Heart right ventricle (tissue), 16 donors: ENCODE measurements at regions of chr12 and their contacts with region 1.

Region 1: DNA sequence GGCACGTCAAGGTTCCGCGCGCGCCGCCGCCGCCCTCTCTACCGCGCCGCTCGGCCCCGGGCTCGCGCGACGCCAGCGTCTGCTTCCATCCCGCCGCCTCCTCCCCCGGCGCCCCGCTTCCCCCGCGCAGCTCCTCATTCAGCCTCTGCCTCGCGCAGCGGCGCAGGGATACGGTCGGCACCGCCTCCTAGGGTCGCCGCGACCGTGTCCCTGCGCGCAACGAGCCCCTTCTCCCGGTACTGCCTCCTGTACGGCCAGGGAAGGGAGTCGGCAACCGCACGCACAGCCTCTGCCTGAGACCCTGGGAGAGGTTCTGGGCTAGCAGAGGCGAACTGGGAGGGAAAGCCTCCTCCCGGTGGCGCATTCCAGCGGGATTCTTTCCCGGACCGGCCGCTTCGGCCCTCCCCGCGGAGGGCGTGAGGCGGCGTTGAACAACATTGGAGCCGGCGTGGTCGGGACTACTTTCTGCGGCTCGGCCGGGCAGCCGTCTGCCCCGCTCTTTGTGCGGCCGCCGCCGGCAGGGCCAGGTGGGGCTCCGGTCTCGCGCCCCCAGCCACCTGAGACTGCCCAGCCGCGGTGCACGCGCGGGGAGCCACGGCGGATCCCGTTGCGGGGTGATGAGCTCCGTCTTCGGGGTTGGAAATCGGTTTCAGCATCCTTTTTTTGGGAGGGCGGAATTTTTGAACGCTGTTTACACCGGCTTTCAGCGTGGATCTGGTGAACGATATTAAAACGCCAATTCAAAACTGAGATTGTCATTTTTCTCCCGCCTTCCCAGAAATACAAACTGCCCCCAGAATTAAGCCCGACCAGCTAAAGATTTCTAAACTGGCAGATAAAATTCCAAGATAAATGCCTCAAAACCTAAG is at the start of gene LRP6:
- DNase-seq: peak; percentile 91 to 92
- ATAC-seq: peak; percentile 97 to 99 (median 98)
- H3K4me3 ChIP-seq: peak within 1 kb of the TSS; percentile 61 to 95 (median 80)
- H3K27ac ChIP-seq: peak within 1 kb of the TSS; percentile 96 to 100 (median 99)
- H3K4me1 ChIP-seq: peaks cover 0 to 28% (median 17%) of the 10 kb centered on the region in 9 donors
- H3K27me3 ChIP-seq: peaks cover 0 to 40% (median 0%) of the 10 kb centered on the region in 7 donors
- CTCF ChIP-seq: peak in 1 of 9 donors; percentile 8
- total RNA-seq, gene LRP6: 20.3 to 31.1 (median 25.9) TPM

Region 2: DNA sequence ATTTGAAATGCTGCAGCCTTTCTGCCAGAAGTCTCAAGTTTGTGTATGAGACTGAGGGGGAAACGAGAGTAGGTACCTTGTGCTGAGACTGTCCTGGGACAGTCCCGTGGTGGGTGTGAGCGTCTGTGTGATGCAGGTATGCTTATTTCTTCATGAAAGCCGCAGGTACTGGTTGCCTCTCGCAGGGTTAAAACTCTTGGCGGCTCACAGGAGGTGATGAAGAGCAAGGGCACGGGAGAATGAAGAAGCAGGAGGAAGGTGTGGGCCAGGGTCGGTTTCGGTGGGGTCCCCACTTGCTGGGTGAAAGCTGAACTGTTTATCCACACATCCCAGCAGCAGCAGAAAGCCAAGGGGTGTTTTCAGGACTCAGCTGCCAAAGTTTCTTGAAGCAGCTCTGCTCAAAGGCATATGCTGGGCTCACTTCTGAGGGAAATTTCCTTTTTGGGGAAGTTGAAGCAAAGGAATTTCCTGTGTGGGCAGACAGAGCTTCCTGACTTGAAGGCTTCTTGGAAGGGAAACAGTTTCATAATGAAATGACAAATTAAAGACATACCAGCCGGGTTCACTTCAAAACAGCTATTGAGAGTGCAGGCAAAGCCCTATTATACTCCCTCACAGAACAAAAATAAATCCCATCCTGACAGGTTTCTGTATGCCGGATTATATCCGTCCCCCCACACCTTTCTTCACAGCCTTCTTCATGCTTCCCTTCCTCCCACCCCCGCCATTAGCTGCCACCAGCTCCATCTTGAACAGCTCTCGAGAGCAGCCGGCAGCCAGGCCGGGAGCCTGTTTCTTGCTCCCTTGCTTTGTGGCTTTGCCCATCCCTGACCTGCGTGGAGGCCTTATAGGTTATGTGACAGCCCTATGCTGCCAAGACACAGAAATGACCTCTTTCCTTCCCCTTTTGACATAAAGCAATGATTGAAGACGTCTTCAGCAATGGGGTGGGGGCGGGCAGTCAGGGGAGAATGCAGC is 501.0 kb before region 1 on chr12:
- intact Hi-C with region 1: no loop called
- DNase-seq: peak in 1 of 2 donors; percentile 67
- ATAC-seq: peak; percentile 59 to 85 (median 78)
- H3K4me3 ChIP-seq: peak overlapping the region in 4 of 10 donors; percentile 5 to 21 (median 12)
- H3K27ac ChIP-seq: peak overlapping the region; percentile 5 to 94 (median 80)
- H3K4me1 ChIP-seq: peaks cover 8 to 100% (median 66%) of the 10 kb centered on the region in 9 donors
- H3K27me3 ChIP-seq: no peaks in the 10 kb centered on the region
- CTCF ChIP-seq: no peak

Region 3: GRCh38 chr12:12159988-12160387 is 107.1 kb before region 1 on chr12:
- intact Hi-C with region 1: loop called in 1 of 10 experiments (anchors 10 kb)
- DNase-seq: no peak
- ATAC-seq: peak in 1 of 8 donors; percentile 31
- H3K4me3 ChIP-seq: no peak overlapping the region
- H3K27ac ChIP-seq: peak overlapping the region in 1 of 10 donors; percentile 7
- H3K4me1 ChIP-seq: peaks cover 0 to 24% (median 14%) of the 10 kb centered on the region in 9 donors
- H3K27me3 ChIP-seq: no peaks in the 10 kb centered on the region
- CTCF ChIP-seq: no peak

Region 4: GRCh38 chr12:12201274-12201758 is 65.8 kb before region 1 on chr12:
- intact Hi-C with region 1: no loop called
- DNase-seq: peak in 1 of 2 donors; percentile 14
- ATAC-seq: peak; percentile 25 to 88 (median 80)
- H3K4me3 ChIP-seq: peak overlapping the region in 1 of 10 donors; percentile 11
- H3K27ac ChIP-seq: peak overlapping the region in 6 of 10 donors; percentile 9 to 42 (median 33)
- H3K4me1 ChIP-seq: peaks cover 0 to 18% (median 0%) of the 10 kb centered on the region in 9 donors
- H3K27me3 ChIP-seq: no peaks in the 10 kb centered on the region
- CTCF ChIP-seq: no peak

Region 5: DNA sequence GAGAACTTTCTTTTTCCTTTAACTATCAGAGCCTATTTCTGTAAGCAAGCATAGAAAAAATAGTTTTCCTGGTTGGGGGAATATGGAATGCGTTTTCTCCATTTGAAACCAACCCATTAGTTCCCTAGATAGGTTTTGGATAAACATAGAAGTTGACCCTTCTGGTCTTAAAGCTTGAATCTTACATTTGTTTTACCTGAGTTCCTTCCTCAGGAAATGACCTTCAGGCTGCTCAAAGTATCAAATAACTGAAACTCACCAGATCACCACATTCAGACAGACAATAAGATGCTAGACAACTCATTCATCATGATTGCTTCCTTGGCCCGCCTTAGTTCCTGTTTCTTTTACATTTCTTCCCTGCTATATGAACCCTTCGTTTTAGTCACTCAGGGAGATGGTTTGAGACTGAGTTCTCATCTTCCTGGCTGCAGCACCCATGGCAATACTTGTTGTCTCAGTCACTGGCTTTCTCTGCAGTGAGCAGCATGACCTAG is 52.4 kb before region 1 on chr12:
- intact Hi-C with region 1: loop called in 1 of 10 experiments (anchors 10 kb)
- DNase-seq: no peak
- ATAC-seq: no peak
- H3K4me3 ChIP-seq: no peak overlapping the region
- H3K27ac ChIP-seq: no peak overlapping the region
- H3K4me1 ChIP-seq: peaks cover 0 to 37% (median 23%) of the 10 kb centered on the region in 9 donors
- H3K27me3 ChIP-seq: no peaks in the 10 kb centered on the region
- CTCF ChIP-seq: no peak

Region 6: DNA sequence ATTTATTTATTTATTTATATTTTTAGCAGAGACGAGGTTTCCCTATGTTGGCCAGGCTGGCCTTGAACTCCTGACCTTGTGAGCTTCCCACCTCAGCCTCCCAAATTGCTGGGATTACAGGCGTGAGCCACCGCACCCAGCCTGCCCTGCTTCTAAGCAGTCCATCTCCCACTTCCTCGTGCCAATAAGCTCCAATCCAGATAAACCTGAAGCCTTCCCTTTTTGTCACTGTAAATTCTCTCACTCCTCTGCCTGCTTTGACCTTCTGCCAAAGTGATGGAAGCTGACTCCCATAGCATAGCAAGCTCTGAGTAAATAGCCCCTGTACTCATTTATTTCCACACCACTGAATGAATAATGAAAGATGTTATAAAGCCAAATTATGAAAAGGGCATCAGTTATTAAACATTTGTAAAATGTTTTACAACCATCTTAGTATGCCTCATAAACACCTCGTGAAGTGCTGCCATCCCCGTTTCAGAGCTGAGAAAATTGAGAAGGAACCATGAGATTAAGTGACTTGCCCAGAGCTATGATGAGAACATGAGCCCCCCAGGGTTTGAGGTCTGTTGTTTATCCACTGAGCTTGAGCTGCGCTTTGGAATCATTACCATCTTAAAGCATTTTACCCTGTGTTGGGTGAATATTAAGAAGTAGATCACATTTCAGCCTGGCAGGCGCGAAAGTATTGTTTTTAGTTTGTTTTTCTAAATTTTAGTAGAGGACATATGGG is 52.5 kb after region 1 on chr12:
- intact Hi-C with region 1: loop called in 1 of 10 experiments (anchors 5 kb)
- DNase-seq: no peak
- ATAC-seq: peak in 4 of 8 donors; percentile 14 to 46 (median 32)
- H3K4me3 ChIP-seq: peak overlapping the region in 5 of 10 donors; percentile 0 to 32 (median 8)
- H3K27ac ChIP-seq: peak overlapping the region in 9 of 10 donors; percentile 2 to 71 (median 21)
- H3K4me1 ChIP-seq: peaks cover 0 to 13% (median 3%) of the 10 kb centered on the region in 9 donors
- H3K27me3 ChIP-seq: no peaks in the 10 kb centered on the region
- CTCF ChIP-seq: no peak

Region 7: GRCh38 chr12:12327802-12328201 is 60.7 kb after region 1 on chr12:
- intact Hi-C with region 1: loop called in 3 of 10 experiments (anchors 5 kb)
- DNase-seq: peak in 1 of 2 donors; percentile 34
- ATAC-seq: peak in 6 of 8 donors; percentile 46 to 64 (median 53)
- H3K4me3 ChIP-seq: no peak overlapping the region
- H3K27ac ChIP-seq: peak overlapping the region in 4 of 10 donors; percentile 40 to 49 (median 48)
- H3K4me1 ChIP-seq: peaks cover 0 to 16% (median 5%) of the 10 kb centered on the region in 9 donors
- H3K27me3 ChIP-seq: no peaks in the 10 kb centered on the region
- CTCF ChIP-seq: peak; percentile 50 to 81 (median 73)

Region 8: DNA sequence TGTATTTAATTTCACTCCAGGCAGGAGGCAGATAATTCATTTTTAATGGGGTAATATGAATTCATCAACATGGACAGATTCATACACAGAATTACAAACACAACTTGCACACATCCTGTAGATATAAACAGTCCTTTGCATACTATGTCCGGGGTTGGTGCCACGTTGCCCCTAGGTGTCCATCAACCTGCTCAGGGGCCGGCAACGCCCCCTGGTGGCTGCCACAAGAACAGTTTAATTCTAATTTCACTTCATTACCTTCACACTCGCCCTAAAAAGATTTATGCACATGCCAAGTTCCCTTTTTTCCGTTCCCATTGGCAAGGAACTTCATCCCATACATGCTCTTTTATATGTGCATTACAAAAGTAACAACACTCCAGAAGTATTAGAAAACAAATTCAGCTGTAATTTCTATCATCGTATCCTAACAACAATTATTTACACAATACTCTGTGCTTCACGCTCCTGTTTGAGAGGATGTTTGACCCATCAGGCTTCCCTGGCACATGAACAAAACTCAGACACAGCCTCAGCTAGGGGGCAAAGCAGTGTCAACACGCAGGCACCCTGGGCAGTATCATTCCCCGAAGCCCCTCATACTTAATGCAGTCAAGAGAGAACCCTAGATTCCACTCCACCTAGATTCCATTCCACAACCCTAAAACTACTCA is 67.4 kb after region 1 on chr12:
- intact Hi-C with region 1: loop called in 2 of 10 experiments (anchors 5 kb)
- DNase-seq: peak; percentile 32 to 51
- ATAC-seq: peak; percentile 21 to 65 (median 54)
- H3K4me3 ChIP-seq: no peak overlapping the region
- H3K27ac ChIP-seq: no peak overlapping the region
- H3K4me1 ChIP-seq: peaks cover 0 to 33% (median 19%) of the 10 kb centered on the region in 9 donors
- H3K27me3 ChIP-seq: no peaks in the 10 kb centered on the region
- CTCF ChIP-seq: peak; percentile 80 to 90 (median 86)